ENCODE measurements at regions of chr3 and their contacts with region 1.

Region 1: DNA sequence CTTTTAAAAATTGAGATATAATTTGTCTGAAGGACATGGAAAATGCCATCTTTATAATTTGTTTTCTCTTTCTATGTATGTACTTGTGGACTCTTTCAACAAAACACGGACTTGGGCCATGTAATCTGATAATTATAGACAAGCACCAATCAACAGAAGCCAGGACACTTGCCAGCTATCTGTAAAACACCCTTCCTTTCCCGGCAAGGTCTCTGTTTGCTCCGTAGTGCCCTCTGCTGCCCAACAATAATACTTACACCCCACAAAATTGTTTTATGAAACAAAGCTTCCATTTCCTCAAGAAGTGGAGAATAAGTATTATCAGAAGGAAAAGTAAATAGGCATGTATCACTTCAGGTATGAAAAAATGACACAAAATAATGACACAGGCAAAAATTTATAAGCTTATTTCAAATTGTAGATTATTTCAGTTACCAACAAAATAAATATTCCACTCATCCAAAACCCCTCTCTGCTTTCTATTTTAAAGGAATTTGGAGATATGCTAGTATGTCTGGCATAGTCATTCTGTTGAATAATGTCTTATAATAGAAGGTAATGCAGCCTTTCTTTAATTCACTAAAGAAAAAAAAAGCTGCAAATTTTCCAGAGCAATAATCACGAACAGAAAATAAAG is 32.8 kb downstream of the MYH15 start:
- DNase-seq: peak; percentile 50
- H3K4me3 Mint-ChIP-seq: no peak overlapping the region
- H3K27ac Mint-ChIP-seq: no peak overlapping the region
- H3K4me1 Mint-ChIP-seq: no peaks in the 10 kb centered on the region
- H3K27me3 Mint-ChIP-seq: peaks cover 13% of the 10 kb centered on the region

Region 2: DNA sequence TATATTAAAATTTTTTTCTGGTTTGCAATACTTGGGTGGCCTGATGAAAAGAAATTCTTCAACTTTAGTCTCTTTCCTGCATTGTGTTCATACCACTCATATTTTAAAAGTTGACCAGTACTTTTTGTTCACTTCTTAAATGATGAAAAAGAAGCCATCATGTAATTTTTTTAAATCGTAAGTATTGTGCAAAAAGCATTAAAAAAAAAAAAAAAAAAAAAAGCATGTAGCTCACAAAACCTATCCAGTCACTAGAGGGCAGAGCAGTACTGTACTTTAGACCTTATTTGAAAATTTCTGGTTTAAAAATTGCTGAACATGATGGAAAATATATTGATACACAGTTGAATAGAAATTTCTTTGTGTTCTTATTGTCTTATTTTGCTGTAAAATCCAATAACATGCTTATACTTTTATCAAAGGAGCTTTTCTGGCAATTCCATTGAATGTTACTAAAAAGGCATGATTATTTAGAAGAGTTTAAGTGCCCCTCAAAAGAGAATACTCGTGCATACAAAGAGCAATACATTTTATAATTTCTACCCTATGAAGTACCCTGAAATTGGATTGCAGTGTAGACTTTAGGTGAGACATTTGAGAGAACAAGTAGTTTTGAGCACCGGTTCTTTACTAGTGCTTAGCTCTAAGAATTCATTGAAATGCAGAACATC is 817.2 kb before region 1 on chr3:
- intact Hi-C with region 1: loop called (anchors 5 kb)
- DNase-seq: no peak
- H3K4me3 Mint-ChIP-seq: no peak overlapping the region
- H3K27ac Mint-ChIP-seq: no peak overlapping the region
- H3K4me1 Mint-ChIP-seq: peaks cover 12% of the 10 kb centered on the region
- H3K27me3 Mint-ChIP-seq: no peaks in the 10 kb centered on the region

Region 3: DNA sequence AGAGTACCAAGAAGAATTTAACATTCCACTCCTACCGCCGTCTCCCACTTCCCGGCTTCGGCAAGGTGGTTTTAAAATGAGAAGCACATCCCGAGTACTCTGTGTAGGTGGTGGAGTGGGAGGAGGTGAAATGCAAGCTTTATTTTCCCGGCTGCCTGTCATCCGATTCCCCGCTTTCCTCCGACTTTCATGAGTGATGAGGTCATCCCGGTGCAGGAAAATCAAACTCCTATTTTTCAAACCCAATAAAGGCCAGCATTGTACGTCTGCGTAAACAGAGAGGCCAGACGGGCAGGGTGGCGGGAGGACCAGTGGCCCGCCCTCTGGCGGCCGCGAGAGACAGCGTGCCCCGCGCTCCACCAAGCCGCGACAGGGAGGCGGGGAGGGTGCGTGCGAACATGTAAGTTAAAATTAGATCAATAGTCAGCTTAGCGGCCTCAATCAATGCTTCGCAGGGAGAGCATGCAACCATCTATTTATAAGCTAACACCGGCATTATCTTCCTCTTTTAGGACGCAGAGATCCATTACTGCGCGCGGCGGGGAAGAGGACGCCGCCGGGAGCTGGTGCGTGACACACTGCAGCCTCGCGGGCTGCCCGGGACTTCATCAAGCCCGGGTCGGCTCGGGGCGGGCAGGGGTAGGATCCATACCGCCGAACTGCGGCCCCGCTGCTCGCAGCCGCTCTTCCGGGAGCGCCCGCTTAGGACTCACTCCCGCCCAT is 550.1 kb before region 1 on chr3:
- intact Hi-C with region 1: loop called (anchors 1 kb)
- DNase-seq: peak; percentile 50
- H3K4me3 Mint-ChIP-seq: peak overlapping the region; percentile 85
- H3K27ac Mint-ChIP-seq: no peak overlapping the region
- H3K4me1 Mint-ChIP-seq: peaks cover 9% of the 10 kb centered on the region
- H3K27me3 Mint-ChIP-seq: peaks cover 18% of the 10 kb centered on the region

Region 4: GRCh38 chr3:108153451-108153981 is 324.1 kb before region 1 on chr3:
- intact Hi-C with region 1: loop called (anchors 1 kb)
- DNase-seq: peak; percentile 35
- H3K4me3 Mint-ChIP-seq: no peak overlapping the region
- H3K27ac Mint-ChIP-seq: no peak overlapping the region
- H3K4me1 Mint-ChIP-seq: peaks cover 20% of the 10 kb centered on the region
- H3K27me3 Mint-ChIP-seq: no peaks in the 10 kb centered on the region

Region 5: DNA sequence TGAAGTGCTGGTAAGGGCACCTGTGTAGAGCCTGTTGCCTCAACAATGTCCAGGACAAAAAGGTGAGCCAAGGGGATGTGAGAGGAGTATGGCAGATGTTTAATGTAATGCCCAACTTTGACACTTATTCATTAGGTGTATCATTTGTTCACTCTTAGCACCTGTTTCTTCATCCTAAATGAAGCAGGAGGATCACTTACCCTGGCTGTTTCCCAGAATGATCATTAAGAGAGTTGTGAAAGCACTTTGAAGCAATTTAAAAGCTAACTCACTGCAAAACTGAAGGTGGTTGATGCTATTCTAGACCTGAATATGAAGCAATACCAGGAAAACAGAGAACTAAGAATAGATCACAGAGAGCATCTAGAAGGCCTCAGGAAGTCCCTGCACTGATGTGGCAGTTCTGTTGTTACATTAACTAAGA is 184.7 kb before region 1 on chr3:
- intact Hi-C with region 1: loop called (anchors 2 kb)
- DNase-seq: no peak
- H3K4me3 Mint-ChIP-seq: peak overlapping the region; percentile 53
- H3K27ac Mint-ChIP-seq: peak overlapping the region; percentile 83
- H3K4me1 Mint-ChIP-seq: peaks cover 64% of the 10 kb centered on the region
- H3K27me3 Mint-ChIP-seq: peaks cover 2% of the 10 kb centered on the region

Region 6: GRCh38 chr3:108378153-108378951 is 99.3 kb before region 1 on chr3:
- intact Hi-C with region 1: no loop called
- DNase-seq: no peak
- H3K4me3 Mint-ChIP-seq: no peak overlapping the region
- H3K27ac Mint-ChIP-seq: no peak overlapping the region
- H3K4me1 Mint-ChIP-seq: no peaks in the 10 kb centered on the region
- H3K27me3 Mint-ChIP-seq: peaks cover 1% of the 10 kb centered on the region

Region 7: DNA sequence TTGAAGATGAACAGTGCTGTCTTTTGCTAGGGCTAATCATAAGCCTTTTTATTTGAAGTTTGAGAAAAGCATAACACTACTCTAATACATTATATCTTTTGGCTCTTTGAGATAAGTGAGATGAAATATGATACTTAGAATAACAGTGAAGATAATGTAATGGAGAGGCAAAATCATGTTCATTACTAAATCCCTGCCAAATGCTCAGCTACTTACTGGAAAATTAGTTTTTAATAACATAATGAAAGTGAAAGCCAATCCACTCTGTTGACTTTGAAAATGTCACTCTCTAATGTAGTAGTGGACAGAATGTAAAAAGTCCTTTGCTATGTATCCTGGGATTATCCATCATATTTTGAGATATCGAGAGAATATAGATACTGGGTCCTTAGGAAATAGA is 68.6 kb after region 1 on chr3:
- intact Hi-C with region 1: no loop called
- DNase-seq: no peak
- H3K4me3 Mint-ChIP-seq: no peak overlapping the region
- H3K27ac Mint-ChIP-seq: no peak overlapping the region
- H3K4me1 Mint-ChIP-seq: peaks cover 13% of the 10 kb centered on the region
- H3K27me3 Mint-ChIP-seq: no peaks in the 10 kb centered on the region

Region 8: GRCh38 chr3:108602249-108602934 is 124.8 kb after region 1 on chr3:
- intact Hi-C with region 1: no loop called
- DNase-seq: no peak
- H3K4me3 Mint-ChIP-seq: peak overlapping the region; percentile 45
- H3K27ac Mint-ChIP-seq: peak overlapping the region; percentile 80
- H3K4me1 Mint-ChIP-seq: peaks cover 52% of the 10 kb centered on the region
- H3K27me3 Mint-ChIP-seq: no peaks in the 10 kb centered on the region

Measured in activated T-helper 1 cell treated with anti-CD3 and anti-CD28 coated beads, Interleukin-12 subunit alpha, Interleukin-12 subunit beta, Interleukin-2, Interleukin-4 antibody, amounts not matched to agents 30 ng/mL and 10 ng/mL and 1 ng/mL, durations not matched to agents 14 hours and 24 hours and 36 hours (primary cell).